ENCODE measurements at regions of chr9 and their contacts with region 1.

Region 1: DNA sequence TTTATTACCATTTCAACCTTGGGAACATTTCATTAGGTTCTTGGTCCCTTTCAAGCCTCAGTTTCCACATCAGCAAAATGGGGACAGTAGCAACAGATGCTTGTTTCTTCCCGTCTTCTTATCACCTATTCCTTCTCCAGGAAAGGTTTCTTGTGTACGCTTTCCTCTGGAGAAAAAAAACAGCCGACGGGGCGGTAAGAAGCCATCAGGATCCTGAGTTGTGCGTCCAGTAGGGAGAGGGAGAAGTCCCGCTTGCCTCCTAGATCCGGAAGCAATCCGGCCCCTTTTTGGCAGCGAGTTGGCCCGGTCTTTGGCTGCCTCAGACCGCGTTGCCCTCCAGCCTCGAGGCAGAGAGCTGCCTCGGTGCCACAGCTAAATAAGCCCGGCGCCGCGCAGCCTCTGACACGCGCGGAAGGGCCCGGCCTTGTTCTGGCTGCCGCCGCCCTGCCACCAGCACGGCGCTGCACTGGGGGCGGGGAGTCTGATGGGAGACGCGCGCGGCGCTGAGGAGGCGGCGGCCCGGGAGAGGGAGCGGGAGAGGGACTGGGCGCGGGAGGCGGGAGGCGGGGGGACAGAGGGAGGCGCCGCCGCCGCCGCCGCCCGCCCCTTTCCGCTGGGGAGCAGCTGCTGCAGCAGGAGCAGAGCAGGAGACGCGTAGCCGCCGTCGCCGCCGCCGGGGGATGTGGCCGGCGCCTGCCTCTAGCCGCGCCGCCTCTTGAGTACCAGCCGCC is at the start of gene SLC44A1:
- DNase-seq: peak; percentile 88 to 95 (median 92)
- ATAC-seq: peak; percentile 92
- H3K4me3 ChIP-seq: peak within 1 kb of the TSS; percentile 89
- H3K4me3 Mint-ChIP-seq: peak within 1 kb of the TSS; percentile 90 to 97 (median 92)
- H3K27ac ChIP-seq: peak within 1 kb of the TSS; percentile 67
- H3K27ac Mint-ChIP-seq: peak within 1 kb of the TSS; percentile 84 to 97 (median 90)
- H3K4me1 ChIP-seq: peaks cover 10% of the 10 kb centered on the region in 2 donors
- H3K4me1 Mint-ChIP-seq: peaks cover 19 to 42% (median 29%) of the 10 kb centered on the region in 7 donors
- H3K27me3 ChIP-seq: no peaks in the 10 kb centered on the region
- H3K27me3 Mint-ChIP-seq: peaks cover 0 to 82% (median 0%) of the 10 kb centered on the region in 5 donors
- total RNA-seq, gene SLC44A1: 7.7 to 13.8 (median 11.1) TPM

Region 2: DNA sequence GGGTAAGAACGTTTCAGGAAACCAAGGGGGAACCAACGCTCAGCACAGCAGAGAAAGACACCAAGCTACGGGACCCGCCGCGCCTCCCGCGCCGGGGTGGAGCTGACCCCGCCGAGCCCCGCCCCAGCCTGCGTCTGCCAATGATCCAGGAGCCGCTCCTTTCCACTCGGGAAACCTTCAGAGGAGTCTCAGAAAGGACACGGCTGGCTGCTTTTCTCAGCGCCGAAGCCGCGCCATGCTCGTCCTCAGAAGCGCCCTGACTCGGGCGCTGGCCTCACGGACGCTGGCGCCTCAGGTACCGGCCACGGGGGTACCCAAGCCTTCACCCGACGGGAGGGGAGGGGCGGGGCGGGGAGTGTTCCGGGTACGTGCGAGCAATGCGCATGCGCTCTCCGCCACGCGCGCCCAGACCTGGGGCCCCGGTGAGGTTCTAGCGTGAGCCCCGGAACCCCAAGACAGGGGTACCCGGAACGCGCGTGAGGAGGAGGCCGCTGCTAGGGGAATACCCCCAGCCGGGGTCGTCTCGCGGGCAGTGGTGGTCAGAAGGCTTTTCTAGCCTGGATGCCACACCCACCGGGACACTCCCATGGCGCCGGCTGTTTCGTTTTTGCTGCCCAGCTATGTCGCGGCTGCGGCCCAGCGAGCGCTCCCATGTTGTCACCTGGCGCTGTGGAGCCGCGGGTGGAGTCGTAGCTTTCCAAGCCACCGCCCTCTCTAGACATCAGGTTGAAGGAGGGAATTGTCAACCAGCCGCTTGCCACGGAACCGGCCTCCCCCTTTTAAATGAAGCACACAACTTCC is 496.4 kb before region 1 on chr9 and contains the start of gene NIPSNAP3A:
- CTCF ChIA-PET with region 1: no interaction called
- POLR2A ChIA-PET with region 1: no interaction called
- intact Hi-C with region 1: loop called (anchors 1 kb)
- DNase-seq: peak; percentile 78 to 96 (median 89)
- ATAC-seq: peak; percentile 93
- H3K4me3 ChIP-seq: peak within 1 kb of the TSS; percentile 87
- H3K4me3 Mint-ChIP-seq: peak within 1 kb of the TSS; percentile 88 to 98 (median 96)
- H3K27ac ChIP-seq: peak within 1 kb of the TSS; percentile 93
- H3K27ac Mint-ChIP-seq: peak within 1 kb of the TSS; percentile 92 to 99 (median 97)
- H3K4me1 ChIP-seq: peaks cover 0 to 8% of the 10 kb centered on the region in 2 donors
- H3K4me1 Mint-ChIP-seq: peaks cover 14 to 26% (median 22%) of the 10 kb centered on the region in 7 donors
- H3K27me3 ChIP-seq: no peaks in the 10 kb centered on the region
- H3K27me3 Mint-ChIP-seq: peaks cover 0 to 2% (median 0%) of the 10 kb centered on the region in 5 donors
- total RNA-seq, gene NIPSNAP3A: 7.1 to 17.4 (median 13.4) TPM

Region 3: GRCh38 chr9:104927912-104928740 is 316.0 kb before region 1 on chr9 and contains the start of gene ABCA1:
- CTCF ChIA-PET with region 1: no interaction called
- POLR2A ChIA-PET with region 1: no interaction called
- intact Hi-C with region 1: loop called (anchors 1 kb)
- DNase-seq: peak; percentile 55 to 82 (median 73)
- ATAC-seq: peak; percentile 83
- H3K4me3 ChIP-seq: peak within 1 kb of the TSS; percentile 84
- H3K4me3 Mint-ChIP-seq: peak within 1 kb of the TSS; percentile 88 to 97 (median 96)
- H3K27ac ChIP-seq: peak within 1 kb of the TSS; percentile 70
- H3K27ac Mint-ChIP-seq: peak within 1 kb of the TSS in 8 of 9 donors; percentile 54 to 95 (median 72)
- H3K4me1 ChIP-seq: peaks cover 7 to 9% of the 10 kb centered on the region in 2 donors
- H3K4me1 Mint-ChIP-seq: peaks cover 19 to 41% (median 25%) of the 10 kb centered on the region in 7 donors
- H3K27me3 ChIP-seq: no peaks in the 10 kb centered on the region
- H3K27me3 Mint-ChIP-seq: peaks cover 0 to 51% (median 0%) of the 10 kb centered on the region in 5 donors
- total RNA-seq, gene ABCA1: 0.58 to 19.4 (median 1.1) TPM

Region 4: DNA sequence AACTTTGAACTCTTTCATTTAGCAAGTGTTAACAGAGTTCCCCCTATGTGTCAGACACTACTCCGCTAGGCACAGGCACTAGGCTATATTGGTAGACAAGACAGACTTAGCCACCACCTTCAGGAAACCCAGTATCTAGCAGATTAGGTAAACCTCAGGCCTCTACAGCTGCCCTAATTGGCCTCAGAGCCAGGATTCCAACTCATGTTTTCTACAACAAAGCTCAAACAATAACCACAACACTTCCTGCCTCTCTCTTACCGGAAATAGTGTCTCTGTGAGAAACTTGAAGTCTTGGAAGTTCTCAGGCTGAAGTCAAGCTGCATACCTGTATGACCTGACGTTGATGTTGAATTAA is 116.3 kb before region 1 on chr9:
- CTCF ChIA-PET with region 1: no interaction called
- POLR2A ChIA-PET with region 1: no interaction called
- intact Hi-C with region 1: loop called (anchors 1 kb)
- DNase-seq: peak in 8 of 9 donors; percentile 41 to 92 (median 90)
- ATAC-seq: peak; percentile 99
- H3K4me3 ChIP-seq: no peak overlapping the region
- H3K4me3 Mint-ChIP-seq: peak overlapping the region; percentile 35 to 84 (median 74)
- H3K27ac ChIP-seq: no peak overlapping the region
- H3K27ac Mint-ChIP-seq: peak overlapping the region; percentile 42 to 95 (median 78)
- H3K4me1 ChIP-seq: peaks cover 31 to 55% of the 10 kb centered on the region in 2 donors
- H3K4me1 Mint-ChIP-seq: peaks cover 36 to 67% (median 63%) of the 10 kb centered on the region in 7 donors
- H3K27me3 ChIP-seq: no peaks in the 10 kb centered on the region
- H3K27me3 Mint-ChIP-seq: peaks cover 0 to 35% (median 0%) of the 10 kb centered on the region in 5 donors

Region 5: GRCh38 chr9:105269593-105269992 is 25.4 kb after region 1 on chr9:
- CTCF ChIA-PET with region 1: no interaction called
- POLR2A ChIA-PET with region 1: no interaction called
- intact Hi-C with region 1: no loop called
- DNase-seq: no peak
- ATAC-seq: no peak
- H3K4me3 ChIP-seq: no peak overlapping the region
- H3K4me3 Mint-ChIP-seq: no peak overlapping the region
- H3K27ac ChIP-seq: no peak overlapping the region
- H3K27ac Mint-ChIP-seq: no peak overlapping the region
- H3K4me1 ChIP-seq: no peaks in the 10 kb centered on the region
- H3K4me1 Mint-ChIP-seq: peaks cover 6 to 24% (median 14%) of the 10 kb centered on the region in 7 donors
- H3K27me3 ChIP-seq: no peaks in the 10 kb centered on the region
- H3K27me3 Mint-ChIP-seq: no peaks in the 10 kb centered on the region

Region 6: DNA sequence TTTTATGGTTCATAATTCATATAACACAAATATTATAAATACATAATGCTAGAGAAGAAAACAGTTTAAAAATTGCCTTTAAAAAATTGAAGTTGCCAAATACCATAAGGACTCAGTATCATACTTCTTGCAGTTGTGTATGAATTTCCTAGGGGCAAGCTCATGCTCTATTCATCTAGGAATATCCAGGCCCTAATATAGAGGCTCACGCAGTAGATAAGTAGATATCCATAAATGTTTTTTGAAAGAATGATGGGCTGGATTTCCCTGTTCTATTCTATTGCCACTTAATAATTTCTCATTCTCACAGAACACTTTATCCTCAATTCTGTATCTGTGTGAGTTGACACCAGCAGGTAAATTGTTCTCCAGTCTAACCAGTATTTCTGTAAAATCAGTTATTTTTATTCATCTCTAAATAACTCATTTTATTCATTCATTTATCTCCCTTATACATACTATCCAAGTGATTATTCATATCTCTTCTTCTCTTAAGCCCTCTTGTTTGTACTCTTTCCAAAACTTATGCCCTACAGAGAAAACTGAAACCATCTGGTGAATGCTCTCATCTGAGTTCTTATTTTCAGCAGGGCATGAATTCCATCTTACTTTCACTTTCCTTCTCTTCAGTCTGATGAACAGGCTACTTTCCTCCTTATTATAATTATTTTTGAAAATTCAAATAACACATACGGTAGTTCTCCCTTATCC is 97.4 kb after region 1 on chr9:
- CTCF ChIA-PET with region 1: no interaction called
- POLR2A ChIA-PET with region 1: no interaction called
- intact Hi-C with region 1: loop called in 1 of 2 experiments (anchors 5 kb)
- DNase-seq: no peak
- ATAC-seq: no peak
- H3K4me3 ChIP-seq: no peak overlapping the region
- H3K4me3 Mint-ChIP-seq: peak overlapping the region in 7 of 10 donors; percentile 37 to 66 (median 48)
- H3K27ac ChIP-seq: no peak overlapping the region
- H3K27ac Mint-ChIP-seq: peak overlapping the region in 3 of 9 donors; percentile 8 to 15 (median 14)
- H3K4me1 ChIP-seq: no peaks in the 10 kb centered on the region
- H3K4me1 Mint-ChIP-seq: peaks cover 12 to 23% (median 22%) of the 10 kb centered on the region in 7 donors
- H3K27me3 ChIP-seq: no peaks in the 10 kb centered on the region
- H3K27me3 Mint-ChIP-seq: no peaks in the 10 kb centered on the region

Region 7: GRCh38 chr9:105414947-105415661 is 170.9 kb after region 1 on chr9:
- CTCF ChIA-PET with region 1: no interaction called
- POLR2A ChIA-PET with region 1: no interaction called
- intact Hi-C with region 1: loop called (anchors 1 to 2 kb)
- DNase-seq: peak; percentile 30 to 75 (median 58)
- ATAC-seq: peak; percentile 86
- H3K4me3 ChIP-seq: no peak overlapping the region
- H3K4me3 Mint-ChIP-seq: no peak overlapping the region
- H3K27ac ChIP-seq: no peak overlapping the region
- H3K27ac Mint-ChIP-seq: no peak overlapping the region
- H3K4me1 ChIP-seq: no peaks in the 10 kb centered on the region
- H3K4me1 Mint-ChIP-seq: peaks cover 0 to 19% (median 0%) of the 10 kb centered on the region in 7 donors
- H3K27me3 ChIP-seq: no peaks in the 10 kb centered on the region
- H3K27me3 Mint-ChIP-seq: peaks cover 29 to 46% (median 38%) of the 10 kb centered on the region in 5 donors

Region 8: GRCh38 chr9:105694190-105694847 is 450.2 kb after region 1 on chr9 and contains the start of gene TMEM38B:
- CTCF ChIA-PET with region 1: interaction called, 3 read pairs
- POLR2A ChIA-PET with region 1: interaction called, 3 read pairs
- intact Hi-C with region 1: loop called (anchors 1 kb)
- DNase-seq: peak; percentile 72 to 91 (median 85)
- ATAC-seq: peak; percentile 92
- H3K4me3 ChIP-seq: peak within 1 kb of the TSS; percentile 79
- H3K4me3 Mint-ChIP-seq: peak within 1 kb of the TSS; percentile 80 to 97 (median 90)
- H3K27ac ChIP-seq: peak within 1 kb of the TSS; percentile 64
- H3K27ac Mint-ChIP-seq: peak within 1 kb of the TSS; percentile 44 to 88 (median 70)
- H3K4me1 ChIP-seq: peaks cover 7 to 10% of the 10 kb centered on the region in 2 donors
- H3K4me1 Mint-ChIP-seq: peaks cover 13 to 49% (median 40%) of the 10 kb centered on the region in 7 donors
- H3K27me3 ChIP-seq: peaks cover 0 to 3% of the 10 kb centered on the region in 2 donors
- H3K27me3 Mint-ChIP-seq: peaks cover 13 to 31% (median 26%) of the 10 kb centered on the region in 5 donors
- total RNA-seq, gene TMEM38B: 5.8 to 21.0 (median 15.2) TPM